ENCODE measurements at regions of chr3 and their contacts with region 1.

Region 1: GRCh38 chr3:125055913-125056745 is at the start of gene HEG1:
- DNase-seq: peak; percentile 94
- H3K4me3 Mint-ChIP-seq: peak within 1 kb of the TSS; percentile 89
- H3K27ac Mint-ChIP-seq: peak within 1 kb of the TSS; percentile 86
- H3K4me1 Mint-ChIP-seq: peaks cover 48% of the 10 kb centered on the region
- H3K27me3 Mint-ChIP-seq: peaks cover 25% of the 10 kb centered on the region
- total RNA-seq, gene HEG1: 35.3 and 40.8 TPM in 2 replicates

Region 2: GRCh38 chr3:125039131-125040100 is 16.7 kb before region 1 on chr3:
- intact Hi-C with region 1: loop called (anchors 1 kb)
- DNase-seq: no peak
- H3K4me3 Mint-ChIP-seq: no peak overlapping the region
- H3K27ac Mint-ChIP-seq: no peak overlapping the region
- H3K4me1 Mint-ChIP-seq: peaks cover 16% of the 10 kb centered on the region
- H3K27me3 Mint-ChIP-seq: peaks cover 3% of the 10 kb centered on the region

Region 3: GRCh38 chr3:125072301-125072700 is 16.2 kb after region 1 on chr3:
- intact Hi-C with region 1: no loop called
- DNase-seq: no peak
- H3K4me3 Mint-ChIP-seq: no peak overlapping the region
- H3K27ac Mint-ChIP-seq: no peak overlapping the region
- H3K4me1 Mint-ChIP-seq: peaks cover 6% of the 10 kb centered on the region
- H3K27me3 Mint-ChIP-seq: peaks cover 19% of the 10 kb centered on the region

Region 4: GRCh38 chr3:125141596-125142419 is 85.7 kb after region 1 on chr3:
- intact Hi-C with region 1: loop called (anchors 1 kb)
- DNase-seq: peak; percentile 92
- H3K4me3 Mint-ChIP-seq: peak overlapping the region; percentile 82
- H3K27ac Mint-ChIP-seq: peak overlapping the region; percentile 90
- H3K4me1 Mint-ChIP-seq: peaks cover 58% of the 10 kb centered on the region
- H3K27me3 Mint-ChIP-seq: peaks cover 40% of the 10 kb centered on the region

Region 5: DNA sequence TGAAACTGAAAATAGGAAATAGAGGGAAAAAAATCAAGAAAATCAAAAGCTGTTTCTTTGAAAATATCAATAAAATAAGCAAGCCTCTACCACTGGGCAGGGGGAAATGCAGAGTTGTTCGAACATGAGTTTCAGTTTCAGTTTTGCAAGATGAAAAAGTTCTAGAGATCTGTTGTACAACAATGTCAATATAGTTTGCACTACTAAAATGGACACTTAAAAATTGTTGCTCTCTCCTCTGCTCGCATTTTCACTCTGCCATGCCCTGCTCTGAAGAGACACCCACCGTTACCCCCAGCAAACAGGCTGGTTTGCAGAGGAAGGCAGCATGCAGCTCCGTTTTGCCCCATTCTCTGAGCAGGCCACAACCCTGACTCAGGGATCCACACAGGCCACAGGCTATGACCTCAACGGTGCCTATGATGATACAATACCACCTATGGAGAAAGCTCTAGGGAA is 254.5 kb after region 1 on chr3:
- intact Hi-C with region 1: loop called (anchors 10 kb)
- DNase-seq: peak; percentile 84
- H3K4me3 Mint-ChIP-seq: peak overlapping the region; percentile 85
- H3K27ac Mint-ChIP-seq: peak overlapping the region; percentile 91
- H3K4me1 Mint-ChIP-seq: peaks cover 27% of the 10 kb centered on the region
- H3K27me3 Mint-ChIP-seq: no peaks in the 10 kb centered on the region

Region 6: DNA sequence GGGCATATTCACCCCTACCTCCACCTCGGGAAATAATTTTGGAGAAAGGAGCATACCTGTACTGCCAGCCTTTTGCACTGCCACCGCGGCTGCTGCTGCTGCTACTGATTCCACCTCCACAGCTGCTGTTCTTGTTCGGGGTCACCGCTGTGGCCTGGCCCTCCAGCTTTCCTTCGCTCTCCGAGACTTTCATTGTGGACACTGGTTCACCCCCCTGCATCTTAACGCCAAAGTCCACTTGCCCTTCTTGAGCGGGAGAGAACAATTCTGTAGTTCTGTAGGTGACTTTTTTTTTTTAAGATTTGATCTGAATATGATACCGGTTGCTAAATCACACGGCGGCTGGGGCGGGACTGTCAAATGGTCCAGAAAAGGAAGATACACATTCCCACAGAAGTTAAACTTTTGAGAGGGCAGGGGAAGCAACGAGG is 538.5 kb after region 1 on chr3:
- intact Hi-C with region 1: loop called (anchors 5 kb)
- DNase-seq: no peak
- H3K4me3 Mint-ChIP-seq: peak overlapping the region; percentile 90
- H3K27ac Mint-ChIP-seq: peak overlapping the region; percentile 85
- H3K4me1 Mint-ChIP-seq: peaks cover 21% of the 10 kb centered on the region
- H3K27me3 Mint-ChIP-seq: no peaks in the 10 kb centered on the region